Activated CD8-positive, alpha-beta T cell treated with anti-CD3 and anti-CD28 coated beads, Interleukin-2, amount 10 ng/mL, durations not matched to agents 7 days and 5 days (primary cell): ENCODE measurements at regions of chr3 and their contacts with region 1.

Region 1: DNA sequence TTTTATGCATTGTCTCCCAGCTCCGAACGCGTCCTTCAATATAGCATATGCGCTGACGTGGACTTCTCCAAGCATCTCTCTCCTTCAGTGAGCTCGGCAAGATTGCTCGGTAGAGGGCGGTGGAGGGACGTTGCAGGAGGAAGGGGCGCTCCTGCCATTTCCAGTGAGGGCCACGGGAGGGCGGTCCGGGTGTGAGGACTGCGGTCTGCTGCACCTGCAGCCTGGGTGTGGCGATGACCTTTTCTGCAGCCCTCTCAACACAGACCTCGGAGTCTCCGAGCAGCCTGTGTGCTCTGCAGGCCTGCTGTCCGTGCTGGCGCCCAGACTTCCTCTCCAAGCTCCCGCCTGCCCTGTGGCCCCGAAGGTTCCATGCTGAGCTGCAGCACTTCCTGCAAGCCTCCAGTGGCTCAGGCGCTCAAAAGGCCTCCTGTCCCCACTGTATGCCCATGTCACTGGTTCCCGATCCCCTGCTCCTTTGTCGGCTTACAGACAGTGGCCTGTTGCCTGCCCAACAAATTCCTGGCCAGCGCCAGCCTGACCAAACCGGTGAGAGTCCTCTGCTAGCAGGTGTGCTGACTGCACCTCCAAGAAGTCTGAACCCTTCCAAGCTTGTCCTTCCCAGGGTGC is 8.9 kb upstream of the RTP3 start:
- DNase-seq: peak; percentile 96
- ATAC-seq: peak; percentile 99
- H3K4me3 Mint-ChIP-seq: peak overlapping the region; percentile 47
- H3K27ac Mint-ChIP-seq: peak overlapping the region; percentile 17
- H3K4me1 Mint-ChIP-seq: peaks cover 30% of the 10 kb centered on the region
- H3K27me3 Mint-ChIP-seq: peaks cover 12% of the 10 kb centered on the region

Region 2: DNA sequence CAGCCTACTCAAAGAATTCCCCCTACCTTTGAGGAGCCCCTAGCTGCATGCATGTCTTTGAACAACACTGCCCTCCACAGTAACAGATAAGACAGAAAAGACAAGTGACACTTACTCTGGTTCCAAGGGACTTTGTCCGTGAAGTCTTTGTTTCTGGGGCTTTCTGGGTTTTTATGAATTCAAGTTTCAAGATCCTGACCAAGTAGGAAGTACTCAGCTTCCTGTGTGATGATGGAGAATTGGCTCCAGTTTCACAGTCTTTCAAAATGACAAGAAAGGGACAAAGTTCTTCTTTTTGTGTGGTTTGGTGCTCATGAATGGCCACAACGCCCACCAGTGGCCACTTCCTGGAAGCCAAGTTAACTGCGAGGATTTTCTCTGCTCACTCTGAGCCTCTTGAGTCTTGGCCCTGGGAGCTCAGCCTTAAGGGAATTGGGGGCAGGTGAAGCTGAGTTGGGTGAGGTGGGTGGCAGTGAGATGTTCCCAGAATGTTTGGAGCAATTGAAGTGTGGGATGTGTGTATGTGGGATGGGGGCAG is 280.6 kb before region 1 on chr3 and contains the start of gene CCR1:
- CTCF ChIA-PET with region 1: interaction called, 10 read pairs
- POLR2A ChIA-PET with region 1: no interaction called
- DNase-seq: peak; percentile 85
- ATAC-seq: peak; percentile 69
- H3K4me3 Mint-ChIP-seq: peak within 1 kb of the TSS; percentile 87
- H3K27ac Mint-ChIP-seq: peak within 1 kb of the TSS; percentile 95
- H3K4me1 Mint-ChIP-seq: peaks cover 73% of the 10 kb centered on the region
- H3K27me3 Mint-ChIP-seq: no peaks in the 10 kb centered on the region
- total RNA-seq, gene CCR1: 41.4 to 41.5 TPM

Region 3: DNA sequence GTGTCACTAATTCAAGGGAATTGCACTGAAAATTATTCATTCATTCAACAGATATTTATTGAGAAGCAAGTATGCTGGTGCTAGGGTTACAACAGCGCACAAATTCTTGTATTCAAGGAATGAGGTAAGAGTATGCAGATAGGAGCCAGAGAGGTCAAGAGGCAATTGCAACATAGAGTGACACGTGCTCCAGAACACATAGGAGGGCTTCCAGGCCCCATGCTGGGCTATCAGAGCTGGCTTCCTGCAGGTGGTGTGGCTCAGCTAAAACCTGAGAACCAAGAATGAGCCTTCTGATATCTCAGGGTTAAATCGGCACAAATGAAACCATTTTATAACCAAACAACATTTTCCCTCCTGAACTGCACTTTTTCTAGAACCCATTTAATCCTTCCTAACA is 95.3 kb before region 1 on chr3:
- CTCF ChIA-PET with region 1: no interaction called
- POLR2A ChIA-PET with region 1: no interaction called
- DNase-seq: no peak
- ATAC-seq: no peak
- H3K4me3 Mint-ChIP-seq: no peak overlapping the region
- H3K27ac Mint-ChIP-seq: no peak overlapping the region
- H3K4me1 Mint-ChIP-seq: peaks cover 40% of the 10 kb centered on the region
- H3K27me3 Mint-ChIP-seq: no peaks in the 10 kb centered on the region

Region 4: GRCh38 chr3:46449755-46450552 is 38.9 kb before region 1 on chr3:
- CTCF ChIA-PET with region 1: interaction called, 13 read pairs
- POLR2A ChIA-PET with region 1: no interaction called
- DNase-seq: no peak
- ATAC-seq: no peak
- H3K4me3 Mint-ChIP-seq: no peak overlapping the region
- H3K27ac Mint-ChIP-seq: no peak overlapping the region
- H3K4me1 Mint-ChIP-seq: no peaks in the 10 kb centered on the region
- H3K27me3 Mint-ChIP-seq: peaks cover 37% of the 10 kb centered on the region

Region 5: DNA sequence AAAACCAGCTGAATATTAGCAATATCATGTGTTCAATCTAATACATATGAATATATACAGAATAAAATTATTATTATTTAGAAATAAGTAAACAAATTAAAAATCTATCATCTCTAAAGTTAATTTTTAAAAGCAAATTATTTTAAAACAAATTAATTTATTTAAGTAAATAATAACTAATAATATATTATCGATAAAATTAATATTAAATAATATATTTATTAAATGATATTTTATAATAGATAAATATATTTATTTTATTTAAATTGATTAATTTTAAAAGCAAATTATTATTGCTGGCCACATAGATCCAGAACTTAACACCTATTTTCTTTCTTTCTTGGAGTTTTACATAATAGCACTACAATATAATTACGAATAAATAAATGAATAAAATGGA is 31.1 kb after region 1 on chr3:
- CTCF ChIA-PET with region 1: interaction called, 20 read pairs
- POLR2A ChIA-PET with region 1: no interaction called
- DNase-seq: no peak
- ATAC-seq: no peak
- H3K4me3 Mint-ChIP-seq: no peak overlapping the region
- H3K27ac Mint-ChIP-seq: no peak overlapping the region
- H3K4me1 Mint-ChIP-seq: peaks cover 2% of the 10 kb centered on the region
- H3K27me3 Mint-ChIP-seq: peaks cover 12% of the 10 kb centered on the region

Region 6: DNA sequence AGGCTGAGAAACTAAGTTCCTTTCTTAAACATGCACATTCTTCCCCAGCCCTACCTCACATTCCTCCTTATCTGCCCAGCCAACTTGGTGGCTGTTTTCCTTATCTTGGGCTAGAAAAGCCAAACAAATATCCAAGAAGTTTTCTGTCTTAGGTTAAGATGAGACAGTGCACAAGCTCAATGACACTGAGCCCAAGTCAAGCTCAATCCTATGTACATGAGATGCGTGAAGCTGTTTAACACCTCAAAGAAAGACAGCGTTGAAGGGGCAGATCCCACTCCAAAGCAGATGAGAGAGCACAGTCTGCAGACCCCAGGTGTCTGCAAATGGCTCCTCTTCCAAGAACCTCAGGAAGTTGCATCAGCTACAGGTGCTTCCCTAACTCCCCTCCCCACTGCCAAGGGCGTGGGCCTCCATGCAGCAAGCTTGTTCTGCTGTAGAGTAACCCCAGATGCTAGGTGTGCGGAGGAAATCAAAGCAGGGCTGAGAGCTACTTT is 60.6 kb after region 1 on chr3:
- CTCF ChIA-PET with region 1: interaction called, 42 read pairs
- POLR2A ChIA-PET with region 1: no interaction called
- DNase-seq: no peak
- ATAC-seq: peak; percentile 33
- H3K4me3 Mint-ChIP-seq: no peak overlapping the region
- H3K27ac Mint-ChIP-seq: no peak overlapping the region
- H3K4me1 Mint-ChIP-seq: peaks cover 26% of the 10 kb centered on the region
- H3K27me3 Mint-ChIP-seq: peaks cover 15% of the 10 kb centered on the region

Region 7: GRCh38 chr3:46578973-46579755 is 90.3 kb after region 1 on chr3:
- CTCF ChIA-PET with region 1: interaction called, 11 read pairs
- POLR2A ChIA-PET with region 1: no interaction called
- DNase-seq: no peak
- ATAC-seq: no peak
- H3K4me3 Mint-ChIP-seq: no peak overlapping the region
- H3K27ac Mint-ChIP-seq: no peak overlapping the region
- H3K4me1 Mint-ChIP-seq: peaks cover 4% of the 10 kb centered on the region
- H3K27me3 Mint-ChIP-seq: peaks cover 8% of the 10 kb centered on the region

Region 8: GRCh38 chr3:46629551-46630517 is 141.0 kb after region 1 on chr3:
- CTCF ChIA-PET with region 1: interaction called, 222 read pairs
- POLR2A ChIA-PET with region 1: no interaction called
- DNase-seq: peak; percentile 85
- ATAC-seq: peak; percentile 100
- H3K4me3 Mint-ChIP-seq: peak overlapping the region; percentile 37
- H3K27ac Mint-ChIP-seq: no peak overlapping the region
- H3K4me1 Mint-ChIP-seq: peaks cover 17% of the 10 kb centered on the region
- H3K27me3 Mint-ChIP-seq: peaks cover 3% of the 10 kb centered on the region

Region 9: DNA sequence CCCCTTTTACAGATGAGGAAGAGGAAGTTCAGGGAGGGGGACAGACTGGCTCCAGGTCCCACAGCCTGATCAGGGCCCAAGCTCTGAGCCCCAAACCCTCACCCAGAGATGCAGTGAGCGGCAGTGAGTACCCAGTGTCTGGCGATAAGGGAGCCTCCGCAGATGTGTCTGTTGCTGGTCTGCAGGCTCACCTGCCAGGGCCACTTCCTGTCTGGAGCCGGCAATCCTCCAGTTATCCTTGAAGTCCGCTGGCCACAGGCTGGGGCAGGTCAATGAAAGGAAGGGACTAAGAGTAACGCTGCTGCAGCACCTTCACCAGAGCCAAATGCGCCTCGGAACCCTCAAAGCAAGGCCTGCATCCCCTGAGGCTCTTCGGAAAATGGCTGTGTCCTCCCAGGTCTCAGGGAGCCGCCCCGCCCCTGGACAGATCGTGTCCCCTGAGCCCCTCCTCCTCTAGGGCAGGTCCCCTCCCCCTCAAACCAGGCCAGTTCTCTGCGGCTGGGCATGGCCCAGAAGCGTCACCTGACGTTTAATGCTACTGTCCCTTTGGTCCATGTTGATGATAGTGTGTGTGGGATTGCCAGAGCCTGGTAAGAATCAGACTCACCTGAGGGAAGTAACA is 322.9 kb after region 1 on chr3:
- CTCF ChIA-PET with region 1: no interaction called
- POLR2A ChIA-PET with region 1: no interaction called
- DNase-seq: no peak
- ATAC-seq: no peak
- H3K4me3 Mint-ChIP-seq: no peak overlapping the region
- H3K27ac Mint-ChIP-seq: no peak overlapping the region
- H3K4me1 Mint-ChIP-seq: peaks cover 24% of the 10 kb centered on the region
- H3K27me3 Mint-ChIP-seq: peaks cover 24% of the 10 kb centered on the region